Activated B cell treated with CpG ODN at 0.5 μM for 24 hours (primary cell): ENCODE measurements at regions of chr1 and their contacts with region 1.

Region 1: GRCh38 chr1:36369061-36369861 is 16.5 kb downstream of the STK40 start:
- DNase-seq: peak; percentile 77
- ATAC-seq: peak; percentile 64
- H3K4me3 Mint-ChIP-seq: peak overlapping the region; percentile 28
- H3K27ac Mint-ChIP-seq: peak overlapping the region; percentile 93
- H3K4me1 Mint-ChIP-seq: peaks cover 84% of the 10 kb centered on the region
- H3K27me3 Mint-ChIP-seq: no peaks in the 10 kb centered on the region
- CTCF ChIP-seq: no peak

Region 2: DNA sequence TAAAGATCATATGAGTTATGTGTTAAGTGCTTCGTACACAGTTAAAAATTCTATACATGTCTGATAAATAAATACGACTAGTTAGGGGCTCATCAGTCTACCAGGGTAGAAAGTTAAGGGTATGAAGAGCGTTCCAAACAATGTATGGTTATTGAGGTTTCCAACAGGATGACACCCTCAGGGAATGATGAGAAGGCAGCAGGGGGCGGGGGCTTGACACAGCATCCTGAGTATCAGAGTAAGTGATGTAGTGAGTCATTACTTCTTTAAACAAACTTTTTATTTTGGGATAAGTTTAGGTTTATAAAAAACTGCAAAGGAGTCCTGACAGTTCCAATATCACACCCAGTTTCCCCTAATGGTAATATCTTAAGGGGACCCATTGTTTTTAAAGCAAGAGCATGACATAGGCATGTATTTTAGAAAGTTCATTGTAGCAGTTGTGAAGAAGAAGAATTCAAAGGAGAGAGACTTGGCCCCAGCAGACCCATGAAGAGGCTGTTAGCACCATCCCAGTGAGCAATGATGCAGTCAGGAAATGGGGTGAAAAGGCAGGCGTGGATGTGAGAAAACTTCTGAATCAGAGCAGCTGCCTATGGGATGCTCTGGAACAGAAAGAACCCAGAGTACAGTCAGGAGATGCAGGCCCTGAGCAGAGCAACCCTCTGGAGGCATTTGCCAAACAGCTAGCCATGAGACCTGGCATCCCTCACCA is 713.0 kb before region 1 on chr1:
- CTCF ChIA-PET with region 1: no interaction called
- POLR2A ChIA-PET with region 1: no interaction called
- intact Hi-C with region 1: no loop called
- DNase-seq: no peak
- ATAC-seq: no peak
- H3K4me3 Mint-ChIP-seq: no peak overlapping the region
- H3K27ac Mint-ChIP-seq: no peak overlapping the region
- H3K4me1 Mint-ChIP-seq: no peaks in the 10 kb centered on the region
- H3K27me3 Mint-ChIP-seq: peaks cover 9% of the 10 kb centered on the region
- CTCF ChIP-seq: no peak

Region 3: DNA sequence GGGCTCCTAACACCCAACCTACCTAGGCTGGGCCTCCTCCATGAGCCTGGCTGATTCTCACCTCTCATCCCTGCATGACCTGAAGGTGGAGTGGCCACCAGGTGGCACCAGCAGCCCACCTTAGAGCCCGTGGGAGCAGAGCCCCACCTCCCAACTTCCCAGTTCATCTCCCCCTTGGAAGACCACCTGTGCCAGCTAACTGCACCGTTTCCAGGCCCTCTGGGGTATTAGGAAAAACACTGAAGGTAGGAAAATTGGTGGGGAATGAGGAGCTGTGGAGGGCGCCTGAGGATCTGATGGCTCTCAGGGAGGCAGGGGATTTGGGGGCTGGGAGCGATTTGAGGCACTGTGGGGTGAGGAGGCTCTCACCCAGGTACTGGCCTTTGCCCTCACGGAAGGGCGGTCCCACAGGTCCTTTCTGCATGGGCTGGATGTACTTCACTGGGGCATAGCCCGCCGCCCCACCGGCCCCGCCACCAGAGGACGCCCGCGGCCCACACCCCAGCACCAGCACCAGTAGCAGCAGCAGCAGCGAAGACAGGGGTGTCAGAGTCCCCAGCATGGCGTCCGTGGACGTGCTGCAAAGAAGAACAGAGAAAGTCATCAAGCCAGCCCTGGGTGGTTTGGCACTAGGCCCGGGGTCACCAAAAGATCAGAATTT is 269.4 kb before region 1 on chr1:
- CTCF ChIA-PET with region 1: no interaction called
- POLR2A ChIA-PET with region 1: interaction called, 3 read pairs
- intact Hi-C with region 1: loop called (anchors 1 kb)
- DNase-seq: peak; percentile 67
- ATAC-seq: peak; percentile 86
- H3K4me3 Mint-ChIP-seq: no peak overlapping the region
- H3K27ac Mint-ChIP-seq: no peak overlapping the region
- H3K4me1 Mint-ChIP-seq: peaks cover 3% of the 10 kb centered on the region
- H3K27me3 Mint-ChIP-seq: no peaks in the 10 kb centered on the region
- CTCF ChIP-seq: no peak

Region 4: GRCh38 chr1:36306902-36307456 is 62.3 kb before region 1 on chr1:
- CTCF ChIA-PET with region 1: no interaction called
- POLR2A ChIA-PET with region 1: interaction called, 6 read pairs
- intact Hi-C with region 1: loop called (anchors 2 kb)
- DNase-seq: peak; percentile 94
- ATAC-seq: peak; percentile 98
- H3K4me3 Mint-ChIP-seq: peak overlapping the region; percentile 97
- H3K27ac Mint-ChIP-seq: peak overlapping the region; percentile 88
- H3K4me1 Mint-ChIP-seq: peaks cover 40% of the 10 kb centered on the region
- H3K27me3 Mint-ChIP-seq: no peaks in the 10 kb centered on the region
- CTCF ChIP-seq: no peak

Region 5: GRCh38 chr1:36342481-36343478 is 26.5 kb before region 1 on chr1:
- CTCF ChIA-PET with region 1: interaction called, 29 read pairs
- POLR2A ChIA-PET with region 1: interaction called, 6 read pairs
- intact Hi-C with region 1: loop called (anchors 1 kb)
- DNase-seq: peak; percentile 47
- ATAC-seq: peak; percentile 89
- H3K4me3 Mint-ChIP-seq: no peak overlapping the region
- H3K27ac Mint-ChIP-seq: peak overlapping the region; percentile 50
- H3K4me1 Mint-ChIP-seq: peaks cover 3% of the 10 kb centered on the region
- H3K27me3 Mint-ChIP-seq: no peaks in the 10 kb centered on the region
- CTCF ChIP-seq: no peak

Region 6: DNA sequence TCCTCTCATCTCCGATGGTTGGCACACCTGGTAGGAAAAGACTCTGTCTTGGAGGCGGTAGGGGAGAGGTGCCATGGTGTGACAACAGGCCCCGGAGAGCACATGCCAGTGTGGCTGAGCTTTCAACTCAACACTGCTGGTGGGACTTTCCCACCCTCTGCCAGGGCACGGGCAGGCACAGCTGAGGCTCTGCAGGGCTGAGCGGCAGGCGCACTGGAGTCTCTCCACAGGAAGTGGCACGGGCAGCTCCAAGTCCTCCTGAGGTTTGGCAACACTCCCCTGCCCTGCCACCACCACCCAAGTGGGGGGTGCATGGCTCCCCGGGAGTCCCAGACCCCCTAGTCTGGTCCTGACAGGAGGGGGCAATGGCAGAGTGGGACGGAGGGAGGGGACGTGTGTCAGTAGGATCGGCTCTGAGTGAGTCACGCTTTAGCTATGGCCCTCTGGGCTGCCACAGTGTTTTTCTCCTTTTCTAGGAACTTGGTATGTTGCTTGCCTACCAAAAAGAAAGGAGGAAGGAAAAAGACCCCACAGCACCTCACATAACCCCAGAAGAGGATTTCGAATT is 18.5 kb before region 1 on chr1:
- CTCF ChIA-PET with region 1: interaction called, 13 read pairs
- POLR2A ChIA-PET with region 1: interaction called, 5 read pairs
- intact Hi-C with region 1: loop called (anchors 1 kb)
- DNase-seq: peak; percentile 36
- ATAC-seq: peak; percentile 90
- H3K4me3 Mint-ChIP-seq: no peak overlapping the region
- H3K27ac Mint-ChIP-seq: peak overlapping the region; percentile 66
- H3K4me1 Mint-ChIP-seq: peaks cover 29% of the 10 kb centered on the region
- H3K27me3 Mint-ChIP-seq: no peaks in the 10 kb centered on the region
- CTCF ChIP-seq: no peak

Region 7: DNA sequence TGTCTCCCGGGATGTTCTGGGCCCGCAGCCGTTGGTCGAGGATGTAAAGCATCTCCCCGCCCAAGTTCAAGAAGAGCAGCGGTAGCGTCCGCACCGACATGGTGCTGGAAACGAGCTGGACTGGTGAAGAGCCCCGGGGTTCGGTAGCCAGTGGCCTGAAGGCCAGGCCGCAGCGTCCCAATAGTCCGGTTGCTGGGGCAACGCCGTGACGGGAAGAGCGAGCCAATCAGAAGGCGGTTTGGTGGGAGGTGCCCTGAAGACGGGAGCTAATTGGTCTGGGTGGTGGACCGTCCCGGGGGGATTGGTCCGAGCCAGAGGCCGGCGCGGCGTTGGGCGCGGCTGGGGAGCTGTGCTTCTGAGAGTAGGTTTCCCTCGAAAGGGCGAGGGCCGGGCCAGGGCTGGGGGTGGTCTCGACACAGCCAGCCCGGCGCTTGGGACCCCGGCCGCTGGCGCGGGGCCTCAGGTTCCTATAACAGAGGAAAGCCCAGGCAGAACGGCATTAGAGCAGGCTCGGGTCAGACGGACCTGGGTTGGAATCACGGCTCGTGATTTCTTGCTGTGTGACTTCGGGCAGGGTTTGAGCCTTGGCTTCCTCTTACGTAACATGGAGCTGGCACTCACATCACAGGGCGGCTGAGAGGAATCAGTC is 81.1 kb after region 1 on chr1 and contains the start of gene OSCP1:
- CTCF ChIA-PET with region 1: no interaction called
- POLR2A ChIA-PET with region 1: no interaction called
- intact Hi-C with region 1: loop called (anchors 1 kb)
- DNase-seq: peak; percentile 88
- ATAC-seq: peak; percentile 97
- H3K4me3 Mint-ChIP-seq: peak within 1 kb of the TSS; percentile 90
- H3K27ac Mint-ChIP-seq: peak within 1 kb of the TSS; percentile 97
- H3K4me1 Mint-ChIP-seq: peaks cover 18% of the 10 kb centered on the region
- H3K27me3 Mint-ChIP-seq: no peaks in the 10 kb centered on the region
- CTCF ChIP-seq: no peak
- total RNA-seq, gene OSCP1: 1.2 and 1.8 TPM in 2 replicates

Region 8: DNA sequence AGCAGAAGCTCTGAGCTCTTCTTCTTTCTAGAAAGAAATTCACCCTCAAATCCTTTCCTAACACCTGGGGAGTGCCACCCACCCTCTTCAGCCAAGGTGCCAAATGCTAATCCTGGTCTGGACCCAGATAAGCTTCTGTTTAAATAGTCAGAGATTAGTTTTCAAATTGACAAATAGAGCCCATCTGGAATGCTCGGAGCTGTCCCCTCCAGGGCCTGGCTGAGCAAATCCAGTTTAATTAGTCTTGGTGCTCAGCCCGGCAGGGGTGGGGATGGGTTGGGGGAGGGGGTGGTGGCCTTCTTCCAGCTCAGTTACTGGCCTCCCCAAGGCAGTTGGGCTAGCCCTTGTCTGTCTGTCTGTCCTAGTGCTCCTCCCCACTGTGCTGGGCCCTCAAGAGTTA is 395.5 kb after region 1 on chr1:
- CTCF ChIA-PET with region 1: no interaction called
- POLR2A ChIA-PET with region 1: no interaction called
- intact Hi-C with region 1: no loop called
- DNase-seq: no peak
- ATAC-seq: no peak
- H3K4me3 Mint-ChIP-seq: no peak overlapping the region
- H3K27ac Mint-ChIP-seq: no peak overlapping the region
- H3K4me1 Mint-ChIP-seq: no peaks in the 10 kb centered on the region
- H3K27me3 Mint-ChIP-seq: peaks cover 10% of the 10 kb centered on the region
- CTCF ChIP-seq: no peak